HEK293 (cell line): ENCODE measurements at regions of chr9 and their contacts with region 1.

Region 1: DNA sequence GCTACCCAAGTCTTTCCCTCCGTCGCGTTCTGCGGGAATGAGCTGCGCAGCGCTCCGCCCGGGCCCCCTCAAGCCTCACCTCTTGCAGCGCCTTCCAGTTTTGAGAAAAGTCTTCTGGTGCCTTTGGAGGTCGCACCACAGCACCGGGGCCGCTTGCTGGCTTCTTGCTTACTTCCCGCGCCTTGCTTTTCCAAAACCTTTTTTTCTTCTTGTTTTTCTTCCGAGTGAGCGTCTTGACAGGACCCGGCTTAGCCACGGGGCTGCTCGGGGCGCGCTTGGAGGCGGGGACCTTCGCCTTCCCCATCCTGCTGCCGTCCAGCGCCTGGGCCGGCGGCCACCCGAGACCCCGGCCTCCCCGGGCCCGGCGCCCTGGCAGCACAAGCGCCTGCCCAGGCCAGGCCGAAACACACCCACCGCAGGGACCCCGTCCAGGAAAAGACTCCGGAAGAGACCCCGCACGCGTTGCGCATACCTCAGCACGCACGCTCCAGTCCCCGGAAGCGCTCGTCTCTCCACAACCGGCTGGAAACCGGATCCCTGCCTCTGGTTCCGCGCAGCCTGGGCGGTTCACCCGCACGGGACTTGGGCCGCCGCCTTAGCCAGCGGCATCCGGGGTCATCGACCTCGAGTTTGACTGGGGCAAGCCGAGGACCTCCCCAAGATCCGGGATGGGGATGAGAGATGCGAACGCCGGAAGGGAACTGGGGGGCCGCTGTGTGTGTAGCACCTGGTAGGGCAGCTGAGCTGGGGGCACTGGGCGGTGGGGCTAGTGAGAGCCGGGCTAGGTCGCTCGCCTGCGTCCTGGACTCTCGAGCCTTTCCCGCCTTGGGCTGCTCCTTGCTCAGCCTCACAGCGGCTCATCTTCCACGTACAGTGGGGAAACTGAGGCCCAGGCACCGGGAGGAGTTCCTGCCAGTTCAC is at the start of gene REXO4:
- H3K4me3 ChIP-seq: peak within 1 kb of the TSS; percentile 63
- H3K27ac ChIP-seq: peak within 1 kb of the TSS; percentile 77
- H3K4me1 ChIP-seq: no peaks in the 10 kb centered on the region; the same call in 1 of the 2 replicates
- CTCF ChIP-seq: no peak; the same call in 1 of the 2 replicates

Region 2: GRCh38 chr9:133406480-133407307 is 11.1 kb before region 1 on chr9:
- CTCF ChIA-PET with region 1: interaction called, 20 read pairs
- POLR2A ChIA-PET with region 1: no interaction called
- H3K4me3 ChIP-seq: no peak overlapping the region
- H3K27ac ChIP-seq: no peak overlapping the region
- H3K4me1 ChIP-seq: no peaks in the 10 kb centered on the region
- CTCF ChIP-seq: peak; percentile 92

Region 3: DNA sequence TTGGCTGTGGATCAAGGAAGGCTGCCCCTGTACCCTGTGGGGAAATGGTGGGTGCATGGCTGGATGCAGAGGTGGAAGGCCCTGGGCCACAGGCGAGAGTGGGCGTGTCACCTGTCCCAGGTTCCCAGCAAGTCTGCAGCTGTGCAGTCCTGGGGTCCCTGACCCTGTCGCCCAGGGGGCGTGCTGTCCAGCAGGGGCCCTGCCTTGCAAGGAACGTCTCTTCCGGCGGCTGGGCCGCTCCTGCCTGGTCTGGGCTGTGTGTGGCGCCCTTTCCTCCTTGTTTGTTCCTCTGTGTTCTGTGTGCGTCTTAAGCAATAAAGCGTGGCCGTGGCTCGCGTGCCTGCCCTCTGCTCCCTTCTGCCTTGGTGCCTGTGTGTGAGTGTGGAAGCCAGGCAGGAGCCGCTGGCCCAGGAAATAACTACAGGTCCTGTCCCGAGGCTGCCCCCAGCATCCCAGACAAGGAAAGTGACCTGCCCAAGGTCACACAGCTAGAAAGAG is 52.7 kb after region 1 on chr9:
- CTCF ChIA-PET with region 1: no interaction called
- POLR2A ChIA-PET with region 1: no interaction called
- H3K4me3 ChIP-seq: no peak overlapping the region
- H3K27ac ChIP-seq: no peak overlapping the region
- H3K4me1 ChIP-seq: no peaks in the 10 kb centered on the region
- CTCF ChIP-seq: no peak